ENCODE measurements at regions of chr5 and their contacts with region 1.

Region 1: DNA sequence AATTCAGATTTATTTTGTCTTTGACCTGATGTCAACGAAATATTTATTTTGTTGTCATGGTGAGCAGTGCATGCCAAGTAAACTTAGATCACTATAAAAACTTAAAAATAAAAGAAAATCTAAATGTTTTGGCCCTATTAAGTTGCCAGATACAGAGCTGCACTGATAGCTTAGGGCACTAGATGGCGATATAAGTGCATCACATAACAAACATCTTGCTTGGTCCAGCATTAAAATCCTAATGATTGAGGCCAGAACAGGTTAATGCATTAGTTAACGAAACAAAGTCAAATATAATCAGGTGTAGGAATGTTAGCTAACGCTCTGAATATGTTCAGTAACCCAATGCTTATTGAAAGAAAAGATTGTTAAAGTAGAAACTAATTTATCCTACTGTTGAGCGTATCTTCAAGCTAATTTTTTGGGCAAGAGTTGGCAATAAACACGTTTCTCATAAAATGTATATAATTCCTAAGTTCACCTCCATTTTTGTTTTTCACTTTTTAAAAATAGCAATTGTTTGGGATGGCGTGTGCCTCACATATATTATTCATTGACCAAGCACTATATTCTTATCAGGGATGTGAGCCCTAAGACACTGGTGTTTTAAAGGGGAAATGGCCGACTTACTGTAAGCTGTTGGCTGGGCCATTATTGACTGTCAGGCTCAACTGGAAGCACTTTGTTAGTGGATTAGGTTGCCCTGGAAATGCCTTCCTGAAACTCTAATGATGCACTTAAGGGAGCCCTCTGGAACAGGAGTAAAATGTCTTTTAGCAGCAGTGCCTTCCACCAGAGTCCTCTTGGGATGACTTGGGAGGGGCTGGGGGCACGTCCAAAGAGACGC is 33.3 kb downstream of the KCTD16 start:
- DNase-seq: peak; percentile 83
- H3K4me3 Mint-ChIP-seq: peak overlapping the region; percentile 22
- H3K27ac Mint-ChIP-seq: no peak overlapping the region
- H3K4me1 Mint-ChIP-seq: peaks cover 15% of the 10 kb centered on the region
- H3K27me3 Mint-ChIP-seq: peaks cover 46% of the 10 kb centered on the region
- CTCF ChIP-seq: peak; percentile 92

Region 2: DNA sequence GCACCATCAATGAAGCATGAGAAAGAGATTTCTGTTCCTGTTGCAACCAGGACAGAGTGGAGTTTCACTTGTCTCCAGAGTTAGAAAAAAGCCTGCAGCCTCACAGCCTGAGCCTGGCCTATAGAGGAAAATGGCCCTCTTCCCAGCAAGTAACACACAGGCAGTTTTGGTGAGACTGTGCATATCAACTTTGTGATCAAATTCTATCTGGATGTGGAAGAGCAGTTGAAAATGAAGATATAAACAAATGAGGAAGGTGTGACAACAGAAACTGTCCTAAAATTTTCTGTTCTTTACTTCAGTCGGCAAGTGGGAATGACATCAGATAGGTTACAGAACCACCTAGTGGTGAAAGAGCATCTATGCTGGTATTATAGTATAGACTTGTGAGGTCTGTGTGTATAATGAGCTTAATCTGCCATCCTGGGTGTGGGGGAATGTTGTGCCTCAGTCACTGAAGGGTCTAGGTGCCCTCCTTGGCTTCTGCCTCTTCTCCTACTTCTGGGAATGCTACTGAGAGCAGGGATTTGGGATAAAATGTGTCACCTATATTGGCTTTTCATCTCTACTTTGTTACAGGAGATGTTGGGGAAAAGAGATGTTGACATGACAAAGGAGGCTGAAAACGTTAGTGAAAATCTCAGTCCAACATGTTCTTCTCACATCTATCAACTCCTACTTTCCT is 61.7 kb before region 1 on chr5:
- CTCF ChIA-PET with region 1: no interaction called
- POLR2A ChIA-PET with region 1: no interaction called
- intact Hi-C with region 1: no loop called
- DNase-seq: peak; percentile 70
- H3K4me3 Mint-ChIP-seq: no peak overlapping the region
- H3K27ac Mint-ChIP-seq: no peak overlapping the region
- H3K4me1 Mint-ChIP-seq: peaks cover 15% of the 10 kb centered on the region
- H3K27me3 Mint-ChIP-seq: no peaks in the 10 kb centered on the region
- CTCF ChIP-seq: peak; percentile 89

Region 3: GRCh38 chr5:144333336-144333920 is 129.5 kb after region 1 on chr5:
- CTCF ChIA-PET with region 1: interaction called, 21 read pairs
- POLR2A ChIA-PET with region 1: no interaction called
- intact Hi-C with region 1: no loop called
- DNase-seq: peak; percentile 57
- H3K4me3 Mint-ChIP-seq: no peak overlapping the region
- H3K27ac Mint-ChIP-seq: peak overlapping the region; percentile 96
- H3K4me1 Mint-ChIP-seq: peaks cover 11% of the 10 kb centered on the region
- H3K27me3 Mint-ChIP-seq: no peaks in the 10 kb centered on the region
- CTCF ChIP-seq: no peak

Region 4: GRCh38 chr5:144697847-144698262 is 493.9 kb after region 1 on chr5:
- CTCF ChIA-PET with region 1: no interaction called
- POLR2A ChIA-PET with region 1: no interaction called
- intact Hi-C with region 1: loop called (anchors 2 kb)
- DNase-seq: peak; percentile 88
- H3K4me3 Mint-ChIP-seq: no peak overlapping the region
- H3K27ac Mint-ChIP-seq: peak overlapping the region; percentile 73
- H3K4me1 Mint-ChIP-seq: peaks cover 19% of the 10 kb centered on the region
- H3K27me3 Mint-ChIP-seq: no peaks in the 10 kb centered on the region
- CTCF ChIP-seq: peak; percentile 18

Region 5: DNA sequence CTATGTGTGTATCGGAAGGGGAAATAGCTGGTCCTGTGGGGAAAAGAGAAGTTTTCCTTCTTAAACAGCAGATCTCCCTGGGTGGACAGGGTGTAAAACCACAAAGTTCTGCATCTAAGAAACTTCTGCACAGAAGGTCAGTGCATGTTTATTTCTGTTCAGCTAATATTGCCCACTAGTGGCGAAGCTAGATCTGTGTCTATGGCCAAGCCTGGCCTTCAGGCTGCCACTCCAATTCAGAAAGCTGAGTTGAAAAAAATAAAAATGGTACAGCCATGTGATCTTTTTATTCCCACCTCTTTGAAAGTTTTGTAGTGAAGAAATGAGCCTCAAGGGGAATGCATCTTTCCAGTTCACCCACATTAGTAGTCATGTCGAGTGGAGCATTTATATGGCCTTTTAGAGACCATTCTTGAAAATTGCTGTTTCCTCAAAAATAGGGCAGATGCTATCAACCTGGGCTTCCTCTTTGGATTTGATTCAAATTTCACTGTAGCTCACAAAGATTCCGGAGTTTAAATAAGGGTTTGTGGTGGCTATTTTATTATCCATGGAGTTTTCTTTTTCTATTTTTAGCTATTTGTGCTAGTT is 1143.1 kb after region 1 on chr5:
- CTCF ChIA-PET with region 1: interaction called, 67 read pairs
- POLR2A ChIA-PET with region 1: no interaction called
- intact Hi-C with region 1: loop called (anchors 1 kb)
- DNase-seq: peak; percentile 66
- H3K4me3 Mint-ChIP-seq: no peak overlapping the region
- H3K27ac Mint-ChIP-seq: no peak overlapping the region
- H3K4me1 Mint-ChIP-seq: peaks cover 11% of the 10 kb centered on the region
- H3K27me3 Mint-ChIP-seq: no peaks in the 10 kb centered on the region
- CTCF ChIP-seq: peak; percentile 88

Region 6: GRCh38 chr5:145811834-145812625 is 1608.1 kb after region 1 on chr5:
- CTCF ChIA-PET with region 1: interaction called, 3 read pairs
- POLR2A ChIA-PET with region 1: no interaction called
- intact Hi-C with region 1: loop called (anchors 5 kb)
- DNase-seq: peak; percentile 60
- H3K4me3 Mint-ChIP-seq: no peak overlapping the region
- H3K27ac Mint-ChIP-seq: no peak overlapping the region
- H3K4me1 Mint-ChIP-seq: no peaks in the 10 kb centered on the region
- H3K27me3 Mint-ChIP-seq: no peaks in the 10 kb centered on the region
- CTCF ChIP-seq: peak; percentile 45

Measured in MCF 10A (cell line).